IMR-90 (cell line): ENCODE measurements at regions of chr11 and their contacts with region 1.

Region 1: GRCh38 chr11:86193297-86194095 is 51.1 kb upstream of the EED start:
- DNase-seq: peak; percentile 80
- ATAC-seq: peak; percentile 99
- H3K4me3 ChIP-seq: peak overlapping the region; percentile 11; the same call in 1 of the 2 replicates
- H3K27ac ChIP-seq: no peak overlapping the region
- H3K4me1 ChIP-seq: peaks cover 5% of the 10 kb centered on the region; the same call in 1 of the 2 replicates
- H3K27me3 ChIP-seq: no peaks in the 10 kb centered on the region
- CTCF ChIP-seq: peak; percentile 76
- POLR2A ChIP-seq: no peak
- RAD21 ChIP-seq: peak; percentile 82

Region 2: GRCh38 chr11:86041975-86042378 is 151.5 kb before region 1 on chr11:
- CTCF ChIA-PET with region 1: interaction called, 10 read pairs
- POLR2A ChIA-PET with region 1: no interaction called
- dilution Hi-C with region 1: no loop called
- in situ Hi-C with region 1: no loop called
- intact Hi-C with region 1: loop called (anchors 1 kb)
- DNase-seq: peak; percentile 94
- ATAC-seq: peak; percentile 89
- H3K4me3 ChIP-seq: no peak overlapping the region
- H3K27ac ChIP-seq: no peak overlapping the region
- H3K4me1 ChIP-seq: peaks cover 13% of the 10 kb centered on the region
- H3K27me3 ChIP-seq: no peaks in the 10 kb centered on the region
- CTCF ChIP-seq: peak; percentile 94
- POLR2A ChIP-seq: no peak
- RAD21 ChIP-seq: peak; percentile 90

Region 3: DNA sequence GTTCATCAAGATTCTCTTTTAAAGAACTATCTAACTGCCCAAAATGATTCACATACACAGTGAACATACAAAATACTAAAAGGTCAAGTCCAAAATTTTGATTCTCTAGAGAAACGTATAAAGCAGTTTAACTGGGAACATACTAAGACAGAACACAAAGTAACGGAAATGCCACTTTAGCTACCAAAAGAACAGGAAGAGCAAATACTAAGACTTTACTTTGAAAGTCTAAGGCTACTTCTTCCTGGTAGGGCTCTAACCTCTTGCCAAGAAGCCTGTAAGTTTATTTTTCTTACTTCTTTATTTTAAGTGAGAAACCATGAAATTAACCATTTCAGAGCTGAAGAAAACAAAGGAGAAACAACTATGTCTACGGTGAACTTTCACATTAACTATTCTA is 130.8 kb before region 1 on chr11:
- CTCF ChIA-PET with region 1: interaction called, 9 read pairs
- POLR2A ChIA-PET with region 1: no interaction called
- dilution Hi-C with region 1: no loop called
- in situ Hi-C with region 1: no loop called
- intact Hi-C with region 1: loop called (anchors 1 kb)
- DNase-seq: no peak
- ATAC-seq: no peak
- H3K4me3 ChIP-seq: no peak overlapping the region; the same call in 1 of the 2 replicates
- H3K27ac ChIP-seq: no peak overlapping the region
- H3K4me1 ChIP-seq: peaks cover 9% of the 10 kb centered on the region
- H3K27me3 ChIP-seq: no peaks in the 10 kb centered on the region
- CTCF ChIP-seq: no peak
- POLR2A ChIP-seq: no peak
- RAD21 ChIP-seq: no peak